ENCODE measurements at regions of chr9 and their contacts with region 1.

Region 1: GRCh38 chr9:107530679-107531078 is 41.1 kb upstream of the KLF4 start:
- DNase-seq: no peak
- ATAC-seq: no peak
- H3K4me3 ChIP-seq: no peak overlapping the region
- H3K27ac ChIP-seq: no peak overlapping the region
- H3K4me1 ChIP-seq: no peaks in the 10 kb centered on the region
- H3K27me3 ChIP-seq: no peaks in the 10 kb centered on the region
- CTCF ChIP-seq: no peak

Region 2: DNA sequence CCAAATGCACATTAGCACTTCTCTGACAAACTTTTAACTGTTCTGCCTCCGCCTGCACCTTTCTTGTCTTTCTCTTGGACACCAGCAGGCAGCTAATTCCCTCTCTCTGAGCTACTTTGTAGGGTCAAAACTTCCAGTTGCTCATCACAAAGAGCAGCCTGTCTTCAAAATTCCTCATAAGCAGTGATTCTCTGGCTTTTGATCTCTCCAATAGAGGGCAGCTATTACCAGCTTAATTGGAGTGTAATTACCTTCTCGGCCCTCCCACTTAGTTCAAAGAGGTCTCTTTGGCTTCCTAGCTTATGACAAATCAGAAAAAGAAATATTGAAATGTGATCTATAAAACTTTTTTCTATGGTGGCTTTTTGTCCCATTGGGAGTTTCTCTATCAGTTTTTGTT is 291.2 kb before region 1 on chr9:
- CTCF ChIA-PET with region 1: interaction called, 13 read pairs
- POLR2A ChIA-PET with region 1: no interaction called
- in situ Hi-C with region 1: no loop called
- intact Hi-C with region 1: no loop called
- DNase-seq: no peak
- ATAC-seq: no peak
- H3K4me3 ChIP-seq: no peak overlapping the region
- H3K27ac ChIP-seq: no peak overlapping the region
- H3K4me1 ChIP-seq: peaks cover 3% of the 10 kb centered on the region; the same call in 1 of the 2 replicates
- H3K27me3 ChIP-seq: no peaks in the 10 kb centered on the region
- CTCF ChIP-seq: peak; percentile 26; the same call in 1 of the 2 replicates

Region 3: GRCh38 chr9:107518037-107518807 is 12.5 kb before region 1 on chr9:
- CTCF ChIA-PET with region 1: interaction called, 11 read pairs
- POLR2A ChIA-PET with region 1: no interaction called
- in situ Hi-C with region 1: no loop called
- intact Hi-C with region 1: no loop called
- DNase-seq: no peak
- ATAC-seq: no peak
- H3K4me3 ChIP-seq: no peak overlapping the region
- H3K27ac ChIP-seq: no peak overlapping the region
- H3K4me1 ChIP-seq: no peaks in the 10 kb centered on the region
- H3K27me3 ChIP-seq: no peaks in the 10 kb centered on the region
- CTCF ChIP-seq: no peak